Adrenal gland (tissue), 19 donors: ENCODE measurements at regions of chr17 and their contacts with region 1.

Region 1: DNA sequence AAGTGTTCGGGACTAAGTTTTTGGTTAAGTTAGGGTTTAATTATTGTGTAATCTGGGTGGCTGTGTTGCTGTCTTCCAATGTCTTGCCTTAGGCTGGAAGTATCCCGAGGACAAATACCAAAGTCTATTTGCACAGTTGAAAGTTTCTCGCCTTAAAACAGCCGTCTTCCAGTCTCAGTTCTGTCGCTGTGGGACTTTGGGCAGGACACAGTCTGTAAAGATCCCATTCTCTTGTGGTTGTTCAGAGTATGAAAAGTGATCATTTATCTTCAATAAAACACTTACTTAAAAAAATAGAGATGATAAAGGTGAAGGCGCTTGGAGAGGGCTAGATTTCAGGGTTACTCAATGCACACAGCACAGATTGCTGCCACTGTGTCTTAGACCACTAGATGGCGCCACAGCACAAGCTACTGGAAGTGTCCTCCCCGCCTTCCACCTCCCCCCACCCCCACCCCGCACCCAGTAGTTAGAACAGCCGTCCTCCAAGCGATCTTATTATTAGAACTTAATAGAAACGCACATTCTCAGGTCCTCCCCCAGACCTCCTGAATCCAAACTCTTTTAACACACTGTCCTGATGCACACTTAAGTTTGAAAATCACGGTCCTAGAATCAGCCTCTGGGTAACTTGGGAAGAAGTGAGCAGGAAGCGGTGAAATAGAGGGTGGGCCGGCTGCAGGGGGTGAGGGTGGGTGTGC is 45.9 kb downstream of the AKAP1 start:
- DNase-seq: peak; percentile 82 to 96 (median 88)
- H3K4me3 ChIP-seq: peak overlapping the region in 1 of 4 donors; percentile 20
- H3K27ac ChIP-seq: no peak overlapping the region
- H3K4me1 ChIP-seq: no peaks in the 10 kb centered on the region
- H3K27me3 ChIP-seq: no peaks in the 10 kb centered on the region
- CTCF ChIP-seq: peak; percentile 63 to 91 (median 78)
- POLR2A ChIP-seq: no peak

Region 2: DNA sequence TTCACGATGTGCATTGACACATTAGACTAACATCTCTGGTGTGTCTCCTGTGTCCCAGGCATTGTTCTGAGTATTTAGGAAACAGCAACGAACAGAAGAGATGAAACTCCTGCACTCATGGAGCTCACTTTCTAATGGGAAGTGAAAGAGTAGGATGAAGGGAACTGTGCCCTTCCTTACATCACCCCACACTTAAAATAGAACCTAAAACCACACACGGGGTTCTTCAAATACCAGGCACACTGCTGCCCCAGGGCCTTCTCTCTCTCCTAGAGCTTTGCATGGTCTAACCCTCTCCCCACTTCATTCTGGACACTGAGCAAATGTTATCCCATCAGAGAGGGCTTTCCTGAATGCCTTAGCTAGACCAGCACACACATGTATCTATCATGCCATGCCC is 250.8 kb before region 1 on chr17:
- intact Hi-C with region 1: no loop called
- DNase-seq: no peak
- H3K4me3 ChIP-seq: no peak overlapping the region
- H3K27ac ChIP-seq: no peak overlapping the region
- H3K4me1 ChIP-seq: no peaks in the 10 kb centered on the region
- H3K27me3 ChIP-seq: no peaks in the 10 kb centered on the region
- CTCF ChIP-seq: no peak
- POLR2A ChIP-seq: no peak

Region 3: DNA sequence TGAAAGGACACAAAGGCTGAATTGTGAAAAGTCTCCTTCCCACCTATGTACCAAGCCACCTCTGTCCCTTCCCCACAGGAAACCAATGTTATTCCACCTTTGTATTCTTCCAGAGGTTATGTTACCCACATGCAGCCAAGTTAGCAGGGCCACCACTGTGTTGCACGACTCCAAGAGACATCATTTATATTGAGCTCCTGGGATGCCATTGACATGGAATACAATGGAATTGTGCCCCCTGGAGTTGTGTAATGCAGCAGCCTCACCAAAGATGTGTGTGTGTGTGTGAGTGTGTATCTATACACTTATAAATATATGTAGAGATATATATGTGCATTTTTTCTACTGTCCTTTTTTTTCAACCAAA is 103.8 kb after region 1 on chr17:
- intact Hi-C with region 1: no loop called
- DNase-seq: no peak
- H3K4me3 ChIP-seq: no peak overlapping the region
- H3K27ac ChIP-seq: no peak overlapping the region
- H3K4me1 ChIP-seq: no peaks in the 10 kb centered on the region
- H3K27me3 ChIP-seq: no peaks in the 10 kb centered on the region
- CTCF ChIP-seq: no peak
- POLR2A ChIP-seq: no peak

Region 4: DNA sequence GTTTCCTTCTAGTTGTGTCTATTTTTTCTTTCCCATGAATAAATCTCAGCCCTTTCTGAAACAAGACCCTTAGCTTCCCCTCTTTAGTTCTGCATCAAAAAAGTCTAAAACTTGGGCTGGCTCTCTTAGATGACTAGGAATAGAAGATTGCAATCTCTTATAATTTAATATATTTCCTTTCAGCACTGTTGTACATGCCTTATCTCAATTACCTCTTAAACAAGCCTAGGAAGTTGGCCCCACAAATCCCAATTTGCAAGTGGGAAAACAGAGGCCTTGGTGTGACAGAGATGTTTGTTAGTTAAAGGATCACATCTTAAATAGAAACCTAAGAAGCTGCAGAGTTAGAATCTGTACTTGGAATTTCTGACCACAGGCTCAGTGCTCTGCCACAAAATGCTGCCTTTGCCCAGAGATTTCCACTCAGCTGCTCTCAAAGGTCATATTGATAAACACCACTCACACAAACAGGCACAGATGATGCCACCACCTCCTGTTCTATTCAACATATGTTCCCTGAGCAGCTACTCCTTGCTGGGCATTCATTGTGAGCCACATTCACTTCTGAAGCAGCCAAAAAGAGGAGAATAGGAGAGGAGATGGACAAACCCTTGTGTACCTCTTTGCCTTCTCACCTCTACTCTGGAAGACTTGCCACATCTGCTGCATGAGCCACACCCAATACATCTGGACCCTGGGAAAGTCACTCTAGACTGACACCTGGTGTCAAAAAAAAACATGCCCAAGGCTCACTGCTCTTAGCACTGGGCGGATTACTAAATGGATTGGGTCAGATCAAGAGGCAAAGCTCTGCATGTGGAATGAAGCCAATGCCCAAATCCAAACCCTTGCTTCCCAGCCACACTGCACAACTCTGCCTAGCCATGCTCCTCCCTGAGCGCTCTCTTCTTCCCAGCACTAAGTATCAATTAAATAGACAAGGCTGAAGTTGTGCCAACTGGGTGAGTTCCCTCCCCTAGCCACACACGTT is 608.8 kb after region 1 on chr17:
- intact Hi-C with region 1: loop called in 1 of 2 experiments (anchors 5 kb)
- DNase-seq: no peak
- H3K4me3 ChIP-seq: no peak overlapping the region
- H3K27ac ChIP-seq: no peak overlapping the region
- H3K4me1 ChIP-seq: no peaks in the 10 kb centered on the region
- H3K27me3 ChIP-seq: no peaks in the 10 kb centered on the region
- CTCF ChIP-seq: peak in 4 of 6 experiments; percentile 34 to 39 (median 38)
- POLR2A ChIP-seq: no peak

Region 5: DNA sequence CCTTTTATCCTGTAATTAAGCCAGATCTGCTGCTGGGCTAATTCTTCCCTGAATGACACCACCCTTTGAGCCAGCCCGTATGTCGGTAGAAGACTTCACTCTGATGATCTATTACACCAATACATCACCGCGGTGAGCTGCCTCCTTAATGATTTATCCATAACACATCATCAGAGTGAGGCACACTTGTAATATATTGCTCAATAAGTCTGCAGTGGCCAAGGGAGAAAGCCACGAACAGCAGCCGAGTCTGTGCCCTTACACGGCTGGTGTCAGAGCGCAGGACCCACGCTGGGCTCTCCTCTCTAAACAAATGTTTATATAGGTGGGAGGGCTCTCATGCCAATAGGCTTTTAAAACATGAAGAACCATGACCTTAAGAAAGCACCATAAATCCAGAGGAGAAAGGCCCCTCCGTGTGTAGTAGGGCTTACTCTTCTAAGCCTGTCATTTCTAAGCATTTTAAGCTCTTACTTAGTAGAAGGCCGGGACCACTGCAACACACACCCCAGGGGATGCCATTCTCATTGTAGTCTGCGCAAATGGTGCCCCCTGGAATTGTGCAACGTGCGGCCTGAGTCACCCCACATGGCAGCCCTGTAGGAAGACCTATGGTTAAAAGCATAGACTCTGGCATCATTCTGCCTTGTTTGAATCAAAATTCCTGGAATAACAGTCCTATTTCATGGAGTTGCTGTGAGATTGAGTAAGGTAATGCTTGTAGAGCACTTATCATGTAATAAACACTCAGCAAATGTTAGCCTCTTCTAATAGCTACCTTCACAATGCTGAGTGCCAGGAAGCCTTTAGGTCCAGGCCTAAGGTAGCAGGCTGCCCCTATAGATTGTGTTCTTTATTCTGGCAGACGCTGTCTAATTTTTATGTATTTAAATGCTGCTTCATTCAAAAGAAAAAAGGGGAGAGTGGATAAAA is 692.8 kb after region 1 on chr17:
- intact Hi-C with region 1: loop called in 1 of 2 experiments (anchors 10 kb)
- DNase-seq: no peak
- H3K4me3 ChIP-seq: no peak overlapping the region
- H3K27ac ChIP-seq: no peak overlapping the region
- H3K4me1 ChIP-seq: no peaks in the 10 kb centered on the region
- H3K27me3 ChIP-seq: no peaks in the 10 kb centered on the region
- CTCF ChIP-seq: no peak
- POLR2A ChIP-seq: no peak